ENCODE measurements at regions of chr5 and their contacts with region 1.

Region 1: DNA sequence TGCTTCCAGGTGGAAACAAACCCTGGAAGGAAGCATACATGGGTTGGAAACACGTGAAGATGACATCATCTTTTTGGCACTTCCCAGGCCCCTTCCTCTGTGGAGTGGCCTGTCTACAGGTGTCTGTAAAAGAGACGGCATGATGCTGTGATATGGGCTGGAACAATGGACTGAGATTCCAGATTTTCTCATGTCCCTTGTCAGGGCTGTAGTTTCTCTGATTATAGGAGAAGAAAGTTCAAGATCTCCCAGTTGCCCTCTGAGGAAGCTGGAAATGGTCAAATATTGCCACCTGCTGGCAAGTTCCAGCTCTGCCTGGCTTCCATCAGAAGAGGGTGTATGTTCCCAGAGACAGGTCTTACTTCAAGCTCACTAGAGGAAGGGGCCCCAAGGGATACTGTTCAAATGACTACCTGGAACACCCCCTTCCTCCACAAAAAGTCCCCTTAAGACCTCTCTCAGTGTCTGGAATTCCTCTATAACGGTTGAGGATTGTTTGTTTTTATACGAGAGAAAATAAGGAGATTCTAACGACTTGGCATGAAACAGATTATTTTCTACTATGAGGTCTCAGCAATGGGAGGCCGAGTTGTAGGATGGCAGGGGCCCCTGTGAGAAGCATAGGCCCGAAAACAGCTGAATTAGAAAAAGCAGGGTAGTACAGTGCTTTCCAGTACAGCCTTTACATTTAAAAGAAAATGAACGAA is 7.3 kb upstream of the ANXA6 start:
- DNase-seq: peak; percentile 68 to 91 (median 78)
- ATAC-seq: peak; percentile 99
- H3K4me3 ChIP-seq: no peak overlapping the region
- H3K4me3 Mint-ChIP-seq: peak overlapping the region; percentile 3
- H3K27ac ChIP-seq: no peak overlapping the region
- H3K27ac Mint-ChIP-seq: peak overlapping the region; percentile 3
- H3K4me1 ChIP-seq: peaks cover 12% of the 10 kb centered on the region
- H3K4me1 Mint-ChIP-seq: peaks cover 36% of the 10 kb centered on the region
- H3K27me3 ChIP-seq: no peaks in the 10 kb centered on the region
- H3K27me3 Mint-ChIP-seq: no peaks in the 10 kb centered on the region
- CTCF ChIP-seq: peak; percentile 93

Region 2: DNA sequence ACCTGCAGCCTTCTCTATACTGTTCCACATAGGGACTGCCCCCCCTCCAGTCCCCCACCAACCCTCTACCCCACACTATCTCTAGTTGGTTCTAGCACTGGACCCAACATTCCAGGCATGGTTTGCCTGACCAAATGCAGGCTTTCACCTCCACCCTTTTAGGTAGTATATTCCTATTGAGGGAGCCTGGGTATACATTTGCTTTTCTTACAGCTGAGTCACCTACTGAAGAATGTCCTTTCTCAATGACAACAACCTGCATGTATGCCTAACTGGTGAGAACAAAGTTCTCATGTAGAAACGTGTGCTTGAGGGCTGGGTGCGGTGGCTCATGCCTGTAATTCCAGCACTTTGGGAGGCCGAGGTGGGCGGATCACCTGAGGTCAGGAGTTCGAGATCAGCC is 92.2 kb before region 1 on chr5:
- CTCF ChIA-PET with region 1: no interaction called
- POLR2A ChIA-PET with region 1: no interaction called
- intact Hi-C with region 1: no loop called
- DNase-seq: no peak
- ATAC-seq: no peak
- H3K4me3 ChIP-seq: no peak overlapping the region
- H3K4me3 Mint-ChIP-seq: peak overlapping the region; percentile 34
- H3K27ac ChIP-seq: no peak overlapping the region
- H3K27ac Mint-ChIP-seq: peak overlapping the region; percentile 70
- H3K4me1 ChIP-seq: peaks cover 80% of the 10 kb centered on the region
- H3K4me1 Mint-ChIP-seq: peaks cover 80% of the 10 kb centered on the region
- H3K27me3 ChIP-seq: no peaks in the 10 kb centered on the region
- H3K27me3 Mint-ChIP-seq: no peaks in the 10 kb centered on the region
- CTCF ChIP-seq: no peak

Region 3: DNA sequence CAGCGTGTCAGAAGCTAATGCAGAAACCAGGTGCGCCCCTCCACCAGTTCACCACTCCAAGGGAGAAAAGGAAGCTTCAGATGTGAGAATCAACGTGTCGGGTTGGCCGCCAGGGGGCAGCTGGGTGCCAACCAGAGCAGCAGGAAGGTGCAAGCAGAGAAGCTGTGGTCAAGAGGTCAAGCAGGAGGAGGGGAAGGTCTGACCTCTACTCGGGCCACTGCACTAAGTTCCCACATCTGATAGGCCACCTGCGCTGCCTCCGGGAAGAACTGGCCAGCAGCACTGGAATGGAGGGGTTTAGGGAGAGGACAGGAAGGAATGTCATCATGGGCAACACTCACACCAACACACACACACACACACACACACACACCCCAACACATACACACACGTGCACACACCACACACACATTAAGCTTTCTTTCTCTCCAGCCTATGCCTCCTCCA is 38.6 kb before region 1 on chr5:
- CTCF ChIA-PET with region 1: interaction called, 151 read pairs
- POLR2A ChIA-PET with region 1: interaction called, 97 read pairs
- intact Hi-C with region 1: loop called (anchors 1 kb)
- DNase-seq: peak; percentile 42 to 84 (median 62)
- ATAC-seq: peak; percentile 61
- H3K4me3 ChIP-seq: no peak overlapping the region
- H3K4me3 Mint-ChIP-seq: no peak overlapping the region
- H3K27ac ChIP-seq: peak overlapping the region in 1 of 2 donors; percentile 50
- H3K27ac Mint-ChIP-seq: peak overlapping the region; percentile 91
- H3K4me1 ChIP-seq: peaks cover 53% of the 10 kb centered on the region
- H3K4me1 Mint-ChIP-seq: peaks cover 71% of the 10 kb centered on the region
- H3K27me3 ChIP-seq: no peaks in the 10 kb centered on the region
- H3K27me3 Mint-ChIP-seq: no peaks in the 10 kb centered on the region
- CTCF ChIP-seq: peak; percentile 90

Region 4: GRCh38 chr5:151141535-151141934 is 23.3 kb before region 1 on chr5:
- CTCF ChIA-PET with region 1: interaction called, 14 read pairs
- POLR2A ChIA-PET with region 1: interaction called, 9 read pairs
- intact Hi-C with region 1: no loop called
- DNase-seq: peak in 13 of 14 experiments; percentile 34 to 82 (median 50)
- ATAC-seq: peak; percentile 79
- H3K4me3 ChIP-seq: peak overlapping the region; percentile 24
- H3K4me3 Mint-ChIP-seq: peak overlapping the region; percentile 80
- H3K27ac ChIP-seq: peak overlapping the region; percentile 49 to 54
- H3K27ac Mint-ChIP-seq: peak overlapping the region; percentile 91
- H3K4me1 ChIP-seq: peaks cover 95% of the 10 kb centered on the region
- H3K4me1 Mint-ChIP-seq: peaks cover 94% of the 10 kb centered on the region
- H3K27me3 ChIP-seq: no peaks in the 10 kb centered on the region
- H3K27me3 Mint-ChIP-seq: no peaks in the 10 kb centered on the region
- CTCF ChIP-seq: no peak

Region 5: DNA sequence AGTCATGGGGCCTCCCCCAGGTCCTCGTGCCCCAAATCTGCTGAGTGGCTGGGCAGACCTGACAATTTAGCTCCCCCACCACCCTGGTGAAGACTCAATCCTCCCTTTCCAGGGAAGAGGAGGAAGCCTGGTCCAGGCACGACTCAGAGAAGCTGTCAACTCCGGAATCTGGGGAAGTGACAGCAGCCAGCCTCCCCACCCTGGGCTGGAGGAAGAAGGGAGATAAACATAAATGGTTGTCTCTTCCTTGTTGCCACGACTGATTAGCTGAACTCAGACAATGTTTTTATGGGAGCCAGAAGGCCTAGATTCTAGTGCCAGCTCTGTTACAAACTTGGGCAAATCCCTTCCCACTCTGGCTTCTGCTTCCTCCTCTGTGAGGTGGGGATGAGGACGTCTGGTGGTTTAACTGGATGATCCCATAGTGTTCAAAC is 43.7 kb after region 1 on chr5:
- CTCF ChIA-PET with region 1: interaction called, 4 read pairs
- POLR2A ChIA-PET with region 1: interaction called, 4 read pairs
- intact Hi-C with region 1: loop called in 1 of 2 experiments (anchors 5 kb)
- DNase-seq: peak in 2 of 14 experiments; percentile 24 to 35
- ATAC-seq: no peak
- H3K4me3 ChIP-seq: no peak overlapping the region
- H3K4me3 Mint-ChIP-seq: peak overlapping the region; percentile 48
- H3K27ac ChIP-seq: peak overlapping the region; percentile 6 to 18
- H3K27ac Mint-ChIP-seq: peak overlapping the region; percentile 82
- H3K4me1 ChIP-seq: peaks cover 80% of the 10 kb centered on the region
- H3K4me1 Mint-ChIP-seq: peaks cover 78% of the 10 kb centered on the region
- H3K27me3 ChIP-seq: no peaks in the 10 kb centered on the region
- H3K27me3 Mint-ChIP-seq: no peaks in the 10 kb centered on the region
- CTCF ChIP-seq: no peak

Region 6: DNA sequence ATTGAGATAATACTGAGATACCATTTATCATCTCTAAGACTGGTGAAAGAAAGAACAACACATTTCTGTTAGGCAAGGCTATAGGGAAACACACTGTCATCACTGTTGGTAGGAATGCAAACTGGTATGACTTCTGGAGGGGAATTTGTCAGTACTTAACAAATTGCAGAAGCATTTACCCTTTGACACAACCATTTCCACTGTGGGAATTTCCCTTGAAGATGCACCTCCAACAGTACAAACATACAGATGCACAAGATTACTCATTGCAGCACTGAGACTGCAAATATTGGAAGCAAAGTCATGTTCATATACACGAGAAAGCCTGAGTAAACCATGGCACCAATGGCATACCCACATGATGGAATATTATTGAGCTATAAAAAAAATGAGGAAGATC is 105.8 kb after region 1 on chr5:
- CTCF ChIA-PET with region 1: no interaction called
- POLR2A ChIA-PET with region 1: no interaction called
- intact Hi-C with region 1: no loop called
- DNase-seq: peak in 2 of 14 experiments; percentile 43 to 58
- ATAC-seq: no peak
- H3K4me3 ChIP-seq: no peak overlapping the region
- H3K4me3 Mint-ChIP-seq: no peak overlapping the region
- H3K27ac ChIP-seq: no peak overlapping the region
- H3K27ac Mint-ChIP-seq: no peak overlapping the region
- H3K4me1 ChIP-seq: no peaks in the 10 kb centered on the region
- H3K4me1 Mint-ChIP-seq: no peaks in the 10 kb centered on the region
- H3K27me3 ChIP-seq: no peaks in the 10 kb centered on the region
- H3K27me3 Mint-ChIP-seq: no peaks in the 10 kb centered on the region
- CTCF ChIP-seq: no peak